H1 (cell line): ENCODE measurements at regions of chr5 and their contacts with region 1.

Region 1: GRCh38 chr5:148957591-148958202 is 105.2 kb downstream of the SH3TC2 start:
- DNase-seq: peak in 1 of 2 experiments; percentile 85
- H3K4me3 ChIP-seq: no peak overlapping the region
- H3K27ac ChIP-seq: no peak overlapping the region
- H3K4me1 ChIP-seq: peaks cover 3 to 6% (median 5%) of the 10 kb centered on the region in 4 experiments; a peak in 6 of 7 replicates
- H3K27me3 ChIP-seq: no peaks in the 10 kb centered on the region
- CTCF ChIP-seq: peak; percentile 73 to 87 (median 86)
- EP300 ChIP-seq: no peak
- POLR2A ChIP-seq: no peak
- RAD21 ChIP-seq: peak; percentile 91 to 96

Region 2: GRCh38 chr5:148820461-148821395 is 137.0 kb before region 1 on chr5:
- CTCF ChIA-PET with region 1: interaction called, 46 read pairs
- POLR2A ChIA-PET with region 1: no interaction called
- DNase-seq: no peak
- H3K4me3 ChIP-seq: no peak overlapping the region
- H3K27ac ChIP-seq: no peak overlapping the region
- H3K4me1 ChIP-seq: peaks cover 0 to 1% (median 0%) of the 10 kb centered on the region in 4 experiments; a peak in 4 of 7 replicates
- H3K27me3 ChIP-seq: peaks cover 0 to 5% (median under 1%) of the 10 kb centered on the region in 4 experiments; a peak in 4 of 7 replicates
- CTCF ChIP-seq: peak in 2 of 3 experiments; percentile 46 to 68; a peak in 3 of 4 replicates
- EP300 ChIP-seq: no peak
- POLR2A ChIP-seq: no peak
- RAD21 ChIP-seq: peak; percentile 46 to 59; a peak in 3 of 4 replicates

Region 3: DNA sequence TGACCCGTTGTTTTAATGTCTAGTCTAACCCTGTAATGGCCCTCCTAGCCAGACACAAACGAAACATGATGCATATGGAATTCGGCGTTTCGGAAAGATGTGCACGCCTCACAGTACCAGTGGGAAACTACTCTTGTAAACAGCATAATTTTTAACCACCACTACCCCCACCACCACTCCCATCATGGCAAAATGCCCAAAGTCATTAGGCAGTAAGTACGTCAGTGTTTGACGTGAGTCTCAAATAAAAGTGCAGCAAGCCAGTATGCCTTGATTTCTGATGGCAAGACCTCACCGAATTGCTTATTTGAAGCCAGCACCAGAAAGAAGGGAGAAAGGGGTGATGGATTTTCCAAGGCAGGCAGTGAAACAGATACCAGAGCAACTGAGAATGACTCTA is 59.9 kb before region 1 on chr5:
- CTCF ChIA-PET with region 1: interaction called, 14 read pairs
- POLR2A ChIA-PET with region 1: no interaction called
- DNase-seq: no peak
- H3K4me3 ChIP-seq: no peak overlapping the region
- H3K27ac ChIP-seq: no peak overlapping the region
- H3K4me1 ChIP-seq: no peaks in the 10 kb centered on the region; a peak in 1 of 7 replicates
- H3K27me3 ChIP-seq: no peaks in the 10 kb centered on the region
- CTCF ChIP-seq: no peak
- EP300 ChIP-seq: no peak
- POLR2A ChIP-seq: no peak
- RAD21 ChIP-seq: no peak

Region 4: DNA sequence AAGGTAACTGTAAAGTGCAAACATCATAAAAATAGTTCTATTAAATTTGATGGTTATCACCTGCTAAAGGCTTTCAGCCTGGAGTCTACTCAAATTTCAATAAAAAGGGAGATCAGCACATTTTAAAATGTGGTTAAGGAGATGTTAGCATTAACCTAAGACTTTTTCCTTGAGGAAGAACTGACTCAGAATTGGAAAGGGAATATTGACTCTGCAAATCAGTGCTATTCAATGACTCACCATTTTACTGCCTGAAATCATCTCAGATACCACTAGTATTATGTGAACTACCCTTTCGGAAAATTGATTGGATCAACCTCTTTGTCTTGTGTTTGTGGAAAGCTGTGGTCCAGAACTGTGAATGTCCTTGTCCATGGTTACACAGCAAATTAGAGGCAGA is 18.0 kb before region 1 on chr5:
- CTCF ChIA-PET with region 1: interaction called, 31 read pairs
- POLR2A ChIA-PET with region 1: no interaction called
- DNase-seq: no peak
- H3K4me3 ChIP-seq: no peak overlapping the region
- H3K27ac ChIP-seq: no peak overlapping the region
- H3K4me1 ChIP-seq: peaks cover 0 to 2% (median 0%) of the 10 kb centered on the region in 4 experiments; a peak in 2 of 7 replicates
- H3K27me3 ChIP-seq: no peaks in the 10 kb centered on the region
- CTCF ChIP-seq: no peak
- EP300 ChIP-seq: no peak
- POLR2A ChIP-seq: no peak
- RAD21 ChIP-seq: no peak

Region 5: DNA sequence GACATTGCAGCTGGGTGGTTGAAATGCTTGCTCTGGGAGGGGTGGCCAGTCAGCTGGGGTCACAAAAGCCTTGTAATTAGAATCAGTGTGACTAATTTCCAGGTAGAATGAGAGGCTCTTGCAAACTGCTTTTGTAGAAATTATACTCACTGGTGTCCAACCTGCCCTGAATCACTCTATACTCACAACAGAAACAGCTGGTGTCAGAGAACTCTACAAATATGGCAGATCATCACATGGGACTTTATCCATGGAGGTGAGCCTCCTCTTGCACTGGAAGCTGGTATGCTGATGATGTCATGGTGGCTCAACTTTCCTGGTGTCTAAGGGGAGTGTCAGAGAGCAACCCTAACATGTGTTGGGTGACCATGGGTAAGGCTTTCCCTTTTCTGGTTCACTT is 33.9 kb after region 1 on chr5:
- CTCF ChIA-PET with region 1: interaction called, 98 read pairs
- POLR2A ChIA-PET with region 1: interaction called, 3 read pairs
- DNase-seq: no peak
- H3K4me3 ChIP-seq: no peak overlapping the region
- H3K27ac ChIP-seq: no peak overlapping the region
- H3K4me1 ChIP-seq: no peaks in the 10 kb centered on the region
- H3K27me3 ChIP-seq: no peaks in the 10 kb centered on the region
- CTCF ChIP-seq: no peak
- EP300 ChIP-seq: no peak
- POLR2A ChIP-seq: no peak
- RAD21 ChIP-seq: no peak

Region 6: DNA sequence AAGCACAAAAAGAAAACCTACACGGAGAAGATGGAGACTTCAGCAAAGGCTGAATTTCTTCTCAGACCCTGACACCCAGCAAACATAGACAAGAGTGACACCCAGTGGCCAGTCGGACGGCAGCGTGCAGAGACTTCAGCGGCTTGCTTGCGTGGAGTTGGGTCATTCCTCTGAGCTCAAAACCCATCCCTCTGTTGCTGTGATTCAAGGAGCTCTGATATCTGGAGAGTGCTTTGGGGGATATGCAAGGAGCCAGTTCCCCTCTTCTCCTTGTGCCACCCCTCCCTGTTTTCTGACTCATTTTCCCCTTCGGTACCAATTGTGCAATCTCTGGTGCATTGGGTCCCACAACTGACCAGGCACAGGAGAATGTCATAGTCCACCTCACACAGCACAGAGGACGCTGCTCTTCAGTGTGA is 77.7 kb after region 1 on chr5:
- CTCF ChIA-PET with region 1: interaction called, 31 read pairs
- POLR2A ChIA-PET with region 1: no interaction called
- DNase-seq: peak; percentile 41 to 80
- H3K4me3 ChIP-seq: no peak overlapping the region
- H3K27ac ChIP-seq: no peak overlapping the region
- H3K4me1 ChIP-seq: no peaks in the 10 kb centered on the region
- H3K27me3 ChIP-seq: no peaks in the 10 kb centered on the region
- CTCF ChIP-seq: peak; percentile 92 to 94 (median 94)
- EP300 ChIP-seq: no peak
- POLR2A ChIP-seq: no peak
- RAD21 ChIP-seq: peak; percentile 96 to 97

Region 7: DNA sequence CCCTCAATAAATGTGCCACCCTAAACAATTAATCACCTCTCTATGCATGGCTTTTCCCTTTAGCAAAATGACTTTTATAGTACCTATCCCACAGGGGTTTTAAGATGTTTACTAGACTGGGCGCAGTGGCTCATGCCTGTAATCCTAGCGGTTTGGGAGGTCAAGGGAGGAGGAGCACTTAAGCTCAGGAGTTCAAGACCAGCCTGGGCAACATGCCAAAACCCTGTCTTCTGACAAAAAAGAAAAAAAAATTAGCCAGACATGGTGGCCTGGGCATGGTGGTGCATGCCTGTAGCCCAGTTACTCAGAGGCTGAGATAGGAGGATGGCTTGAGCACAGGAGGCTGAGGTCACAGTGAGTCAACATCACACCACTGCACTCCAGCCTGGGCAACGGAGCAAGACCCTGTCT is 91.7 kb after region 1 on chr5:
- CTCF ChIA-PET with region 1: no interaction called
- POLR2A ChIA-PET with region 1: no interaction called
- DNase-seq: no peak
- H3K4me3 ChIP-seq: no peak overlapping the region
- H3K27ac ChIP-seq: no peak overlapping the region
- H3K4me1 ChIP-seq: no peaks in the 10 kb centered on the region
- H3K27me3 ChIP-seq: no peaks in the 10 kb centered on the region
- CTCF ChIP-seq: no peak
- EP300 ChIP-seq: no peak
- POLR2A ChIP-seq: no peak
- RAD21 ChIP-seq: no peak

Region 8: DNA sequence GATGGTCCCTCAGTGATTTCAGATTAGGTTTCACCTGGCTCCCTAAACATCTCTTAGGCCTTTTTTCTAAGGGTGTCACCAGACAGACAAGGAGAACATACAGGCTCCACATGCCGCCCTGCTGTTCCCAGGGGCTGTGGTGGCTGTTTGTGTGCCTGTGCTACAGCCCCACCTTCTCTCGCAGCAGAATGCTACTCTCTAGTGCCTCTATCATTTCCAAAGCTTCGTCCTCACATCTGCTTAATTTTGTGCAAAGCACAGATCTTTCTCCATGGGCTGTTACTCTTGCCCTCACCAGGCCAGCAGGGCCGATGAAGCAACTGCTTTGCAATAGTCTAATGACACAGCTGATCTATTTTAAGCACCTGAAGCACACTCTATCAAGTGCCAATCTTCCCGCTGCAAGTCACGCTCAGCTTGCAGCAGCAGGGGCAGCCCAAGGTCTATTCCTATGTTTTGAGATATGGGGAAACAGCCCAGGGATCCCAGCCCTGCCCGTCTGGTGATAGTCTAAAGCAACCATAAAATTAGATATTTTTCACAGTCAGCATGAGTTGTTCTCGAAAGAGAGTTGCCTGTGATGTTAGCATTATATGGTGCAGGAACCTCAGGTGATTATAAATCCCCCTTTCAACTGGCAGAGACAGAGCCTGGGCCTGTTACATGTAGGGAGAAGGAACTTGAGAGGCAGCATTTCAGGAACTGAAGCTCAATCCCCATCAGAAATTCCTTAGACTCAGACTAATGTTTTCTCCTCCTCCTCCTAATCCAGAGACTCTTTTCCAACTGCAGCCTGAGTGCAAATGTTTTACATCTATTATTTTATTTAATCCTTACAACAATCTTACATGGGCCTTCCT is 196.3 kb after region 1 on chr5:
- CTCF ChIA-PET with region 1: no interaction called
- POLR2A ChIA-PET with region 1: no interaction called
- DNase-seq: no peak
- H3K4me3 ChIP-seq: no peak overlapping the region
- H3K27ac ChIP-seq: no peak overlapping the region
- H3K4me1 ChIP-seq: no peaks in the 10 kb centered on the region
- H3K27me3 ChIP-seq: no peaks in the 10 kb centered on the region; a peak in 1 of 7 replicates
- CTCF ChIP-seq: no peak
- EP300 ChIP-seq: no peak
- POLR2A ChIP-seq: no peak
- RAD21 ChIP-seq: no peak

Region 9: DNA sequence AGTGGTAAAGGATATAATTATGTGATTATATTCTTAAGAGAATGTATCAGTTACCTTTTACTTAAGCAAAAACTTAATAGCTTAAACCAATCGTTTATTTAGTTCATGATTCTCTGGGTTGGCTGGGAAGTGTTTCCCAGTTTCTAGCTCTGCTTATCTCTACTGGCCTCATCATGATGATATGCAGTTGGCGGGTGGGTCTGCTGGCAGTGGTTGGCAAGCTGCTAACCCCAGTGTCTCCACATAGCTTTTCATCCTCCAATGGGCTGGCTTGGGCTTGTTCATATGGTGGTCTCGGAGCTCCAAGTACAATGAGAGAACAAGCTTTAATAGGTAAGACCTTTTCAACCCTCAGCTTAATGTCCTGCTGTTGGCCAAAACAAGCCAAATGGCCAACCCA is 227.4 kb after region 1 on chr5:
- CTCF ChIA-PET with region 1: no interaction called
- POLR2A ChIA-PET with region 1: no interaction called
- DNase-seq: no peak
- H3K4me3 ChIP-seq: no peak overlapping the region
- H3K27ac ChIP-seq: no peak overlapping the region
- H3K4me1 ChIP-seq: no peaks in the 10 kb centered on the region
- H3K27me3 ChIP-seq: peaks cover 0 to 1% (median 0%) of the 10 kb centered on the region in 4 experiments; a peak in 1 of 7 replicates
- CTCF ChIP-seq: no peak
- EP300 ChIP-seq: no peak
- POLR2A ChIP-seq: no peak
- RAD21 ChIP-seq: no peak